ENCODE measurements at regions of chr3 and their contacts with region 1.

Region 1: GRCh38 chr3:185929192-185930151 is 8.3 kb downstream of the TRA2B start:
- DNase-seq: no peak

Region 2: GRCh38 chr3:185824476-185825378 is 104.7 kb before region 1 on chr3 and contains the start of gene IGF2BP2:
- in situ Hi-C with region 1: loop called (anchors 10 kb)
- DNase-seq: peak; percentile 88
- total RNA-seq, gene IGF2BP2: 23.0 and 27.6 TPM in 2 replicates